ENCODE measurements at regions of chr15 and their contacts with region 1.

Region 1: GRCh38 chr15:56245871-56246814 is 2.5 kb upstream of the RFX7 start:
- DNase-seq: peak; percentile 62 to 87 (median 79)
- H3K4me3 ChIP-seq: no peak overlapping the region
- H3K27ac ChIP-seq: no peak overlapping the region
- H3K4me1 ChIP-seq: peaks cover 2% of the 10 kb centered on the region
- H3K27me3 ChIP-seq: no peaks in the 10 kb centered on the region
- CTCF ChIP-seq: peak; percentile 55 to 89 (median 71)
- EP300 ChIP-seq: no peak
- POLR2A ChIP-seq: no peak

Region 2: GRCh38 chr15:55993111-55993803 is 252.9 kb before region 1 on chr15 and contains the start of gene NEDD4:
- intact Hi-C with region 1: loop called in 1 of 4 experiments (anchors 10 kb)
- DNase-seq: peak; percentile 84 to 89 (median 87)
- H3K4me3 ChIP-seq: peak within 1 kb of the TSS; percentile 96
- H3K27ac ChIP-seq: peak within 1 kb of the TSS; percentile 70 to 87
- H3K4me1 ChIP-seq: no peaks in the 10 kb centered on the region
- H3K27me3 ChIP-seq: no peaks in the 10 kb centered on the region
- CTCF ChIP-seq: peak in 2 of 3 donors; percentile 57 to 58
- EP300 ChIP-seq: no peak
- POLR2A ChIP-seq: peak; percentile 48
- total RNA-seq, gene NEDD4: 7.1 to 12.6 (median 11.0) TPM

Region 3: DNA sequence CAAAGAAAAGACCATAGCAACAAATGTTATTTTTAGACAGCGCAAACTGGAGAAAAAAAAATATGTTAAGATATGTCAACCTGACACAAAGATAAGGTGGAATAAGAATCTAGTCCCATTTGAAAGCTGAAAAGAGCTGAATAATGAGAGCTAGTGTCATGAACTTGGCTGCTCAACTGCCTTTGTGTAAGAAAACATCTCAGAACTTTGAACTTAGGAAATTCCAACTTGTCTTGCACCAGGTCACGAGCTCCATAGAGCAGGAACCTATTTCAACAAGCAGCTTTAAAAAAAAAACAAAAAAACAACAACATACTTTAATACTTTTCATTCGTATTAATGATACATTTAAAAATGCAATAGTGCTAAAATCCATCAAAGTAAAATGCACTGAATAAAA is 407.6 kb after region 1 on chr15:
- intact Hi-C with region 1: no loop called
- DNase-seq: peak in 1 of 5 donors; percentile 14
- H3K4me3 ChIP-seq: no peak overlapping the region
- H3K27ac ChIP-seq: peak overlapping the region in 1 of 2 donors; percentile 79
- H3K4me1 ChIP-seq: peaks cover 4% of the 10 kb centered on the region
- H3K27me3 ChIP-seq: no peaks in the 10 kb centered on the region
- CTCF ChIP-seq: no peak
- EP300 ChIP-seq: no peak
- POLR2A ChIP-seq: no peak

Measured in ovary (tissue), 10 donors.